PC-3 (cell line): ENCODE measurements at regions of chr4 and their contacts with region 1.

Region 1: DNA sequence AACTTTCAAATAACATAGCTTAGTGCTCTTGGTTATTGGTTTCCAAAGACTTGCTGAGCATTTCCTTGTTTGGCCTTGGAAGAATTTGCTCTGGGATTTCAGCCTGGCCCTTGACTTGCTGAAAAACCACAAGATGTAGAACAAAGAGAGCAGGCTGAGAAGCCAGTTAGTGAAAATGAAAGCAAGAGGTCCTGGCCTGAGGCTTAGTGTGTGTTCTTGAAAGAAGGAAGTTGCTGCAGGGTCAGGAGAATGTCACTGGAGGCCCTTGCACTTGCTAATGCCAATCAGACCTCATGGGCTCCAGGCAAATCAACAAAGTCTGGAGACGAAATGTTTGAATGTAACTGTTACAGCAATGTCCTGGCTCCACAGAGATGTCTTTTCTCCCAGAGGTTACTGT is 79.4 kb downstream of the SYNPO2 start:
- DNase-seq: peak; percentile 21
- ATAC-seq: no peak
- H3K4me3 ChIP-seq: no peak overlapping the region
- H3K27ac ChIP-seq: no peak overlapping the region
- H3K4me1 ChIP-seq: peaks cover 11% of the 10 kb centered on the region; the same call in 1 of the 2 replicates
- H3K27me3 ChIP-seq: no peaks in the 10 kb centered on the region
- CTCF ChIP-seq: no peak

Region 2: GRCh38 chr4:118740869-118741268 is 227.1 kb before region 1 on chr4:
- CTCF ChIA-PET with region 1: no interaction called
- POLR2A ChIA-PET with region 1: no interaction called
- intact Hi-C with region 1: loop called (anchors 1 kb)
- DNase-seq: peak; percentile 36
- ATAC-seq: no peak
- H3K4me3 ChIP-seq: no peak overlapping the region
- H3K27ac ChIP-seq: no peak overlapping the region
- H3K4me1 ChIP-seq: no peaks in the 10 kb centered on the region
- H3K27me3 ChIP-seq: no peaks in the 10 kb centered on the region
- CTCF ChIP-seq: peak; percentile 47; the same call in 1 of the 2 replicates

Region 3: GRCh38 chr4:118772081-118772766 is 195.8 kb before region 1 on chr4:
- CTCF ChIA-PET with region 1: no interaction called
- POLR2A ChIA-PET with region 1: no interaction called
- intact Hi-C with region 1: loop called (anchors 1 kb)
- DNase-seq: peak; percentile 58
- ATAC-seq: peak; percentile 71
- H3K4me3 ChIP-seq: no peak overlapping the region
- H3K27ac ChIP-seq: no peak overlapping the region
- H3K4me1 ChIP-seq: 0 out of 2 replicates have a peak, but pooled peaks cover 8% of the 10 kb centered on the region
- H3K27me3 ChIP-seq: no peaks in the 10 kb centered on the region
- CTCF ChIP-seq: peak; percentile 69

Region 4: GRCh38 chr4:118835571-118836300 is 132.3 kb before region 1 on chr4 and contains the start of gene SEC24D:
- CTCF ChIA-PET with region 1: interaction called, 3 read pairs
- POLR2A ChIA-PET with region 1: no interaction called
- intact Hi-C with region 1: loop called (anchors 5 kb)
- DNase-seq: peak; percentile 83
- ATAC-seq: peak; percentile 78
- H3K4me3 ChIP-seq: peak within 1 kb of the TSS; percentile 84
- H3K27ac ChIP-seq: peak within 1 kb of the TSS; percentile 80
- H3K4me1 ChIP-seq: peaks cover 21% of the 10 kb centered on the region
- H3K27me3 ChIP-seq: no peaks in the 10 kb centered on the region
- CTCF ChIP-seq: no peak
- total RNA-seq, gene SEC24D: 14.4 and 18.4 TPM in 2 replicates

Region 5: DNA sequence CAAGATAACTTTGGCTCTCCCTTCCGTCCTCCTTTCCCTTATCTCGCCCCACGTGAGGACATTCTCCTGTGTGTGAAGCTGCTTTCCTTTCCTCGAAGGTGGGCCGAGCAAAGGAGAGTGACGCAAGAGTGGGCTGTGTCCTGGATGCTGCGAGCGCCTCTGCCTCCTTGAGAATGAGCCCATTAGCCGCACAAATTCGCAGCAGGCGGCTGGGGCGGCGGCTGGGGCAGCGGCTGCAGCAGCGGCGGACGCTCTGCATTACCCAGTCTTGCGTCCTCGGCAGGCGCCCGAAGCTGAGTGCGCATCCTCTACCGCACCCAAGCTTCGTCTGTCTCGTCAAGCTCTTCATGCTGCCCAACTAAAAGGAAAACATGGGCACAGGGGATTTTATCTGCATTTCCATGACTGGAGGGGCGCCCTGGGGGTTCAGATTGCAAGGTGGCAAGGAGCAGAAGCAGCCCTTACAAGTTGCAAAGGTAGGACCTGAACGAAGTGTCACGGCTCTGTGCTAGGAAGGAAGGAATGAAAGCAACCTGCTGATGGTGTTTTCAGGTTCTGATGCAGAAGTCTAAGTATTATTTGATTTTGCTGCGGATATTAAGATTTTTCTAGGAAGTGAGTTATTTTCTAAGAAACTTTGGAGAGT is 79.2 kb before region 1 on chr4 and contains the start of gene SYNPO2:
- CTCF ChIA-PET with region 1: no interaction called
- POLR2A ChIA-PET with region 1: no interaction called
- intact Hi-C with region 1: loop called (anchors 1 kb)
- DNase-seq: peak; percentile 59
- ATAC-seq: peak; percentile 97
- H3K4me3 ChIP-seq: peak within 1 kb of the TSS; percentile 68
- H3K27ac ChIP-seq: no peak within 1 kb of the TSS
- H3K4me1 ChIP-seq: 0 out of 2 replicates have a peak, but pooled peaks cover 5% of the 10 kb centered on the region
- H3K27me3 ChIP-seq: no peaks in the 10 kb centered on the region
- CTCF ChIP-seq: no peak
- total RNA-seq, gene SYNPO2: 0.04 and 0.06 TPM in 2 replicates